ENCODE measurements at regions of chr2 and their contacts with region 1.

Region 1: DNA sequence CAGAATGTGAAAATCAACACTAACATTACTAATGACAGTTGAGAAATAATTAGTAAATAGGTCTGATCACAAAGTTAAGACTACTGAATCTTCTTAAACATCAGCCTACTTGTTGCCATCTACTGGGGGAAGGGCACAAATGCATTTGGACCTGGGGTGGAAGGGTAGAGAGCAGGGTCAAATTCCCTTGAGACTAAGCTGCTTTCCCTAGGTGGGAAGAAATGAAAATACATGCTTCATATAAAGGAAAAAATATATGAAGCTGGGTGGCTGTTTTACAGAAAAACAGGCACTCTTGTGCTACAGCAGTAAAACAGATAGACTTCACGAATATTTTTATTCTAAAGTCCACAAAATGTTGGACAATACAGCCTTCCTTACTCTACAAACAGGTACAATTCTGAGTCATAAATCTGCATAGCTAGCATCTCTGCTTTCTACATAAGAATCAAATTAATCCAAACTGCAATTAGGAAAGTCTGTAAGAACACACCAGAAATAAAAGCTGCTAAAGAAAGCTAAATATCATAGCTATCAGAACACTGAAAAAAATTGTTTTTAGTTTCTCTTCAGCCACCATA is 10.9 kb downstream of the TRIP12 start:
- DNase-seq: no peak
- ATAC-seq: peak; percentile 48

Region 2: DNA sequence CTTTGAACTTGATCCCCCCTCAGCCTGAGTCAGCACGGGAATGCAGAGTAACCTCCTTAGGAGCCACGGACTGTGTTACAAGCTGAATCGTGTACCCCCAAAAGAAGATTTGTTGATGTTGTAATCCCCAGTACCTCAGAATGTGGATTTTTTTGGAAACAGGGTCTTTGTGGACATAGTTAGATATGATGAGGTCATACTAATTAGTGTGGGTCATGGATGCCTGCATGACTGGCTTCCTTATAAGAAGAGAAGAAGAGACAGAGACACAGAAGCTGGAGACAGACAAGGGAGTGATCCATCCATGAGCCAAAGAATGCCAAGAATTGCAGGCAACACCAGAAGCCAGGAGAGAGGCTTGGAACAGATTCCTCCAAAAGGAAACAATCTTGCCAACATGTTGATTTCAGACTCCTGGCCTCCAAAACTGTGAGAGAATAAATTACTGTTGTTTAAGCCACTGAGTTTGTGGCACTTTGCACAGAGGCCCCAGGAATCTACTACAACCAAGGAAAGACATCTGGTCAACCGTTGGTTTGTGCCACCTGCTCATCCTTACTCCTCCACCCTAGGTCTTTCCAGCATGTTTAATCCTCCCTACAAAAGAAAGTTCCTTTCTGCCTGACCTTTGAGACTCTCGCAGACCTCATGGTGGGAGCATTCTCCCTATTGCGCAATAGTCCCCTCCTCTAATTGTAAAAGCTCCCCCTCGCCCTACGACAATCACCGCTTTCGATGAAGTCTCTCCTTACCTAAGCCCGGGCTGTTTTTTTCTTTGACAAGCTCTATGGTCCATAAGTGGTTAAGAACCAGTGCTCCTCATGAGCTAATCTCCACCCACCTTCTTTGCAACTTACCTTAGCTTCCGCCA is 288.2 kb before region 1 on chr2:
- intact Hi-C with region 1: no loop called
- DNase-seq: no peak
- ATAC-seq: no peak

Region 3: GRCh38 chr2:229800997-229801754 is 109.7 kb before region 1 on chr2:
- intact Hi-C with region 1: loop called (anchors 10 kb)
- DNase-seq: peak; percentile 50
- ATAC-seq: peak; percentile 67